PC-3 (cell line): ENCODE measurements at regions of chr18 and their contacts with region 1.

Region 1: DNA sequence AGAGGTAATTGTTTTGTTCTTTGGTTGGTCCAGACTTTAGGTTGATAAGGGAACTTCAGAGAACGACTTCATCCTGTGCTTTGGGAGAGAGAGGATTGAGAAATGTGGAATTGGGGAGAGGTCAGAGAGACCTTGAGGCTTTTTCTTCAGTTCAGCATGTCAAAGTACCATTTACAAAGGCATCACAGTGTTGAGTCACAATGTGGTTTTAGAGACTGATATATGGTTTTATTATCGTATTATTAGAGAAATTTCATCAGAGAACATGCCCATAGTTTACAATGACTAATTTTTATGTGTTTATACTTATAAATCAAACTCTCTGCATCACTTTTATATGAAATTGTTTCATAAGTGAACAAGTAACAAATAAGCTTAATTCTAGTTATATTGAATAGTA is 626.6 kb downstream of the DSC3 start:
- DNase-seq: peak; percentile 24
- ATAC-seq: peak; percentile 73
- H3K4me3 ChIP-seq: no peak overlapping the region
- H3K27ac ChIP-seq: no peak overlapping the region
- H3K4me1 ChIP-seq: no peaks in the 10 kb centered on the region
- H3K27me3 ChIP-seq: no peaks in the 10 kb centered on the region
- CTCF ChIP-seq: no peak

Region 2: GRCh38 chr18:30044496-30044895 is 371.4 kb before region 1 on chr18:
- CTCF ChIA-PET with region 1: no interaction called
- POLR2A ChIA-PET with region 1: no interaction called
- intact Hi-C with region 1: no loop called
- DNase-seq: peak; percentile 70
- ATAC-seq: 0 out of 2 replicates have a peak, but pooled peaks have one; percentile 24
- H3K4me3 ChIP-seq: no peak overlapping the region
- H3K27ac ChIP-seq: no peak overlapping the region
- H3K4me1 ChIP-seq: 0 out of 2 replicates have a peak, but pooled peaks cover 9% of the 10 kb centered on the region
- H3K27me3 ChIP-seq: no peaks in the 10 kb centered on the region
- CTCF ChIP-seq: no peak

Region 3: DNA sequence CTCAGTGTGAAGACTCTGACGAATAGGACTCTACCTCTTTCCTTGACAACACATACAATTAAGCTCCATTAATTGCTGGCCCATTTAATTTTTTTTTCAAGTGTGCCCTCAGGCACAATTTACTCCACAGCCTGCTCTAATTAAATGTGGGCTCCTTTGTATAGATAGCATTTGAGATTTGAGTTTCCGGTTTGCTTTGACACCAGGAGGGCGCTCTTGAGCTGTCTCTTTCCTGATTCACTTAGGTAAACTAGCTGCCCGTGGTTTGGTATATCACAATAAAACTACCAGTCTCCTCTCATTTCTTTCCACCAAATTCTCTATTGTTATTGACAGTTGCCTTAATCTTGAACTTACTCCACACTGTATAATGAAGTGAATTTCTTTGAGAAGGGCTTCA is 39.4 kb before region 1 on chr18:
- CTCF ChIA-PET with region 1: no interaction called
- POLR2A ChIA-PET with region 1: no interaction called
- intact Hi-C with region 1: loop called (anchors 2 kb)
- DNase-seq: peak; percentile 57
- ATAC-seq: no peak
- H3K4me3 ChIP-seq: no peak overlapping the region
- H3K27ac ChIP-seq: no peak overlapping the region
- H3K4me1 ChIP-seq: no peaks in the 10 kb centered on the region
- H3K27me3 ChIP-seq: no peaks in the 10 kb centered on the region
- CTCF ChIP-seq: peak; percentile 60

Region 4: GRCh38 chr18:30469091-30469490 is 53.2 kb after region 1 on chr18:
- CTCF ChIA-PET with region 1: no interaction called
- POLR2A ChIA-PET with region 1: no interaction called
- intact Hi-C with region 1: no loop called
- DNase-seq: no peak
- ATAC-seq: no peak
- H3K4me3 ChIP-seq: no peak overlapping the region
- H3K27ac ChIP-seq: no peak overlapping the region
- H3K4me1 ChIP-seq: no peaks in the 10 kb centered on the region
- H3K27me3 ChIP-seq: no peaks in the 10 kb centered on the region
- CTCF ChIP-seq: no peak

Region 5: GRCh38 chr18:31526374-31526773 is 1110.5 kb after region 1 on chr18:
- CTCF ChIA-PET with region 1: no interaction called
- POLR2A ChIA-PET with region 1: no interaction called
- intact Hi-C with region 1: no loop called
- DNase-seq: no peak
- ATAC-seq: no peak
- H3K4me3 ChIP-seq: no peak overlapping the region
- H3K27ac ChIP-seq: no peak overlapping the region
- H3K4me1 ChIP-seq: no peaks in the 10 kb centered on the region
- H3K27me3 ChIP-seq: no peaks in the 10 kb centered on the region
- CTCF ChIP-seq: no peak